Common myeloid progenitor, CD34-positive (primary cell): ENCODE measurements at regions of chr11 and their contacts with region 1.

Region 1: GRCh38 chr11:13962562-13963168 is at the start of gene SPON1:
- DNase-seq: peak; percentile 48 to 73 (median 66)
- H3K4me3 ChIP-seq: peak within 1 kb of the TSS; percentile 13 to 63 (median 50)
- H3K27ac ChIP-seq: no peak within 1 kb of the TSS
- H3K4me1 ChIP-seq: peaks cover 0 to 28% (median 21%) of the 10 kb centered on the region in 4 experiments
- H3K27me3 ChIP-seq: peaks cover 17 to 88% (median 48%) of the 10 kb centered on the region in 5 experiments

Region 2: GRCh38 chr11:14114269-14114668 is 151.6 kb after region 1 on chr11:
- CTCF ChIA-PET with region 1: no interaction called
- POLR2A ChIA-PET with region 1: no interaction called
- DNase-seq: no peak
- H3K4me3 ChIP-seq: no peak overlapping the region
- H3K27ac ChIP-seq: no peak overlapping the region
- H3K4me1 ChIP-seq: no peaks in the 10 kb centered on the region
- H3K27me3 ChIP-seq: peaks cover 0 to 3% (median 0%) of the 10 kb centered on the region in 5 experiments

Region 3: DNA sequence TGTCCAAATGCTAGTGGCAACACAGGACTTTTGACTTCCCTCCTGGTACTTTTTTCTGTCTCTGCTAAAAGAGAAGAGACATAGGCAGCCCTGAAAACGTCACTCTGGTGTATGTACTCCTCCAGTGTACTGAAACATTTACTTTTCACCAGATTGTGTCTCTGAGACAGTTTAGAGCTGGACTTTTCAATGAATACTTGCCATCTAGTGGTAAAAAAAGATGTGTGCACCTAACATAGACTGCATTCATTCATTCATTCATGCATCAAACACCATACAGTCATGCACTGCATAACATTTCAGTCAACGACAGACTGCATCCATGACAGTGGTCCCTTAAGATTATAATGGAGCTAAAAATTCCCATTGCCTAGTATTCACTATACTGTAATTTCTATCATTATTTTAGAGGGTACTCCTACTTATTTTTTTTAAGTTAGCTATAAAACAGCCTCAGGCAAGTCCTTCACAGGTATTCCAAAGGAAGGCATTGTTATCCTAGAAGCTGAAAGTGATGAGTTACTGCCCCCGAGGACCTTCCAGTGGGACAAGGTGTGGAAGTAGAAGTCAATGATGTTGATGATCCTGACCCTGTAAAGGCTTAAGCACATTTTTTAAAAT is 186.1 kb after region 1 on chr11:
- CTCF ChIA-PET with region 1: interaction called, 54 read pairs
- POLR2A ChIA-PET with region 1: no interaction called
- DNase-seq: peak; percentile 38 to 67 (median 66)
- H3K4me3 ChIP-seq: no peak overlapping the region
- H3K27ac ChIP-seq: no peak overlapping the region
- H3K4me1 ChIP-seq: no peaks in the 10 kb centered on the region
- H3K27me3 ChIP-seq: peaks cover 0 to 8% (median 0%) of the 10 kb centered on the region in 5 experiments